ENCODE measurements at regions of chr2 and their contacts with region 1.

Region 1: GRCh38 chr2:190382851-190383250 is 25.3 kb upstream of the MFSD6 start:
- DNase-seq: no peak
- ATAC-seq: peak; percentile 51 to 71 (median 62)
- H3K4me3 ChIP-seq: no peak overlapping the region
- H3K27ac ChIP-seq: no peak overlapping the region
- H3K4me1 ChIP-seq: no peaks in the 10 kb centered on the region
- H3K27me3 ChIP-seq: no peaks in the 10 kb centered on the region
- CTCF ChIP-seq: peak; percentile 33 to 71 (median 59)
- POLR2A ChIP-seq: no peak

Region 2: GRCh38 chr2:190017837-190018236 is 365.0 kb before region 1 on chr2:
- intact Hi-C with region 1: no loop called
- DNase-seq: no peak
- ATAC-seq: no peak
- H3K4me3 ChIP-seq: no peak overlapping the region
- H3K27ac ChIP-seq: no peak overlapping the region
- H3K4me1 ChIP-seq: no peaks in the 10 kb centered on the region
- H3K27me3 ChIP-seq: no peaks in the 10 kb centered on the region
- CTCF ChIP-seq: no peak
- POLR2A ChIP-seq: no peak

Region 3: DNA sequence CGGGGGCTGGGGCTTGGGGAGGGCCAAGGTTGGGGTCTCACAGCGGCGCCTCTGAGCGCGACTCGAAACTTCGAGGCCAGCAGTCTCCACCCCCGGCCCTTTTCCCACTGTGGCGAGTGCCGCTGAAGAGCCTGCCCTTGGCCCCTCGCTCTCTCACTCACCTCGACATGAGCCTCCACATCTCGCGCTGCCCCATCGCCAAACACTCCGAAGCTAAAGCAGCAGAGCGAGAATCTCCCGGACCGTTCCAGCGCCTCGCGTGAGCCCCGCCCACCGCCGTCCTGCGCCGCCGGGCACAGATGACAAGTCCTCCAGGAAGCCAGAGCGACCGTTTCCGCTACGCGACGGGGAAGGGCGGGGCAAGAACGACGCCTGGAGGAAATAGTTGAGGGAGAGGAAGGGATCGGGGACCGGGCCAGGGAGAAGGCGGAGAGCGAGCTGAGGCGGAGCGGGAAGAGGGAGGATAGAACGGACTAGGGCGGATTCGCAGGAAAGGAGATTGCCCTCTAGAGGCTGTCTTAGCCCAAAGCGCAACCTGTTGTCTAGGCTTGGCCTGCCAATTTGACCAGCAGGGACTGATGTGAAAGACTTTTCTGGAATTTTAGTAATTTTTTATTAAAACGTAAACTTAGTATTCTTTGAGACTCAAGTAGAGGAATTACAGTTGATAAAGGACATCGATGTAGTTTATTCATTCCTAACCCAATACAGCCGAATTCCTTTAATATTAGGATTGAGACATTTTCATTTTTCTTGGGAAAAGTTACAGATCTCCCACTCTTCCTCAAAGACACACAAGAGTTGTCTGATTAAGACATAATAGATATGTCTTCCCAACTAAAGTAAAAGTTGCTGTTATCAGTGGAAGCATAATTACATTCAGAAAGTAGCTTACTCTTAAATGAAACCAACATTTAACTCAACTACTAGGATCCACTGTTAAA is 63.0 kb before region 1 on chr2 and contains the start of gene HIBCH:
- intact Hi-C with region 1: loop called in 1 of 10 experiments (anchors 10 kb)
- DNase-seq: peak; percentile 98 to 99 (median 99)
- ATAC-seq: peak; percentile 97 to 99 (median 99)
- H3K4me3 ChIP-seq: peak within 1 kb of the TSS; percentile 65 to 86 (median 74)
- H3K27ac ChIP-seq: peak within 1 kb of the TSS; percentile 42 to 92 (median 86)
- H3K4me1 ChIP-seq: peaks cover 0 to 25% (median 14%) of the 10 kb centered on the region in 12 donors
- H3K27me3 ChIP-seq: no peaks in the 10 kb centered on the region
- CTCF ChIP-seq: peak; percentile 58 to 96 (median 74)
- POLR2A ChIP-seq: peak in 1 of 2 donors; percentile 66
- total RNA-seq, gene HIBCH: 7.7 to 25.3 (median 23.2) TPM

Region 4: DNA sequence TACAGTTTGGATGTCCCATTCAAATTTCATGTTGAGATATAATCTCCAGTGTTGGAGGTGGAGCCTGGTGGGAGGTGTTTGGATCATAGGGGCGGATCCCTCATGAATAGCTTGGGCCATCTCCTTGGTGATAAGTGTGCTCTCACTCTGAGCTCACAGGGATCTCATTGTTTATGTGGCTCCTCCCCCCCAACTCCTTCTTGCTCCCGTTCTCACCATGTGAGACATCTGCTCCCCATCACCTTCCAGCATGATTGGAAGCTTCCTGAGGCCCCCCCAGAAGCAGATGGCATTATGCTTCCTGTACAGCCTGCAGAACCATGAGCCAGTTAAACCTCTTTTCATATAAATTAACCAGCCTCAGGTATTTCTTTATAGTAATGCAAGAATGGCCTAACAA is 42.5 kb before region 1 on chr2:
- intact Hi-C with region 1: no loop called
- DNase-seq: no peak
- ATAC-seq: no peak
- H3K4me3 ChIP-seq: no peak overlapping the region
- H3K27ac ChIP-seq: no peak overlapping the region
- H3K4me1 ChIP-seq: peaks cover 0 to 28% (median 16%) of the 10 kb centered on the region in 12 donors
- H3K27me3 ChIP-seq: no peaks in the 10 kb centered on the region
- CTCF ChIP-seq: no peak
- POLR2A ChIP-seq: no peak

Region 5: GRCh38 chr2:190352668-190353536 is 29.9 kb before region 1 on chr2:
- intact Hi-C with region 1: no loop called
- DNase-seq: no peak
- ATAC-seq: peak; percentile 18 to 64 (median 50)
- H3K4me3 ChIP-seq: no peak overlapping the region
- H3K27ac ChIP-seq: peak overlapping the region in 3 of 12 donors; percentile 1 to 45 (median 28)
- H3K4me1 ChIP-seq: peaks cover 0 to 37% (median 8%) of the 10 kb centered on the region in 12 donors
- H3K27me3 ChIP-seq: no peaks in the 10 kb centered on the region
- CTCF ChIP-seq: no peak
- POLR2A ChIP-seq: no peak

Region 6: DNA sequence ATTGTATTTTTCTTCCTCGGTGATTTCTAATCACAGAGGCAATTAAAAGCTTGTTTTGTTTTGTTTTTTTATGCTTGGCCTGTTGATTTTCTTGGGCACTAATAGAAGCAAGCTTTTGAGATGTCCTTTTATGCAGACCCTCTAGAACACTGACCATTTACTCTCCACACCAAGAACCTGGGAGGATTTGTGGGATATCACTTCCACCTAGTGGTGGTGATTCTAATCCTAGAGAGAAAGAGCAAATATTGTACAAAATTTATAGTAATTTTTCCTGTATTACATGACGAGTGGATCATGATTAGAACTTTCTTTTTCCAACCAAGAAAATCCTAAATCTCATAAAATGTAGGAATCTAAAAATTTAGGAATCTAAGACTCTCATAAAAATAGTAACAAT is 128.3 kb after region 1 on chr2:
- intact Hi-C with region 1: loop called (anchors 1 to 5 kb)
- DNase-seq: no peak
- ATAC-seq: no peak
- H3K4me3 ChIP-seq: no peak overlapping the region
- H3K27ac ChIP-seq: no peak overlapping the region
- H3K4me1 ChIP-seq: peaks cover 0 to 10% (median 0%) of the 10 kb centered on the region in 12 donors
- H3K27me3 ChIP-seq: no peaks in the 10 kb centered on the region
- CTCF ChIP-seq: peak; percentile 16 to 72 (median 58)
- POLR2A ChIP-seq: no peak

Region 7: GRCh38 chr2:190648289-190649034 is 265.6 kb after region 1 on chr2:
- intact Hi-C with region 1: loop called in 1 of 10 experiments (anchors 10 kb)
- DNase-seq: peak; percentile 95 to 96 (median 95)
- ATAC-seq: peak; percentile 92 to 96 (median 94)
- H3K4me3 ChIP-seq: peak overlapping the region; percentile 72 to 93 (median 82)
- H3K27ac ChIP-seq: peak overlapping the region; percentile 80 to 98 (median 92)
- H3K4me1 ChIP-seq: peaks cover 0 to 49% (median 28%) of the 10 kb centered on the region in 12 donors
- H3K27me3 ChIP-seq: no peaks in the 10 kb centered on the region
- CTCF ChIP-seq: no peak
- POLR2A ChIP-seq: peak; percentile 8 to 79

Region 8: DNA sequence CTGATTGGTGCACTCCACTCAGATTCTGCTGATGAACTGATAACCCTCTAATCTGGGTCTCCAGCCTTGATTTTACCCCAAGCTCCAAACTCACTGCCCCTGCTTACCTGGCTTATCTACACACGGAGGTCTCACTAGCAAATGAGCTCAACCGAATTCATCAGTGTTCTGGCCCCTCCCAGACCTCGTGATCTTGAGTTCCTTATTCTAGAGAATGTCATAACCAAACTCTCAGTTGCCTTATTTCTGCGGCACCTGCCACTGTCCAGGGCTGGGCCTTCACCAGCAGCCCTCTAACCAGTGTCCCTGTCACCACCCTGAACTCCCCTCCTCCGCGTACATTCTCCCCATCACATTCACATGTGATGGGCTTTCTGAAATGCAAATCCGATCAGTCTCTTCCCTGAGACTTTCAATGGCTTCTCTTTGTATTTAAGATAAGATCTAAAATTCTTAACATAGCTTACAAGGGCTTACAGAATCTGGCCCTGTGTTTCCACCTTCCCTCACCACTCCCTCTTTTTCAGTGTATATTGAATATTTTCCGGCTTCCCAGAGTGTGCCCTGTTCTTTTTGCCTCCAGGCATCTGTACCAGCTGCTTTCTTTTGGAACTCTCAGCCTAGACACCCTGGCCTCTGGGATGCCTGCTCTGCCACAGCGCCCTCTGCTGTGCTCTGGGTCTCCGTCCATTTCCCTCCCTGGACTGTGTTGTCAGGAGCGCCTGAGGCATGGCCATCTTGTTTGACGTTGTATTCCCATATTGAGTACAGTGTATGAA is 297.2 kb after region 1 on chr2:
- intact Hi-C with region 1: loop called in 1 of 10 experiments (anchors 10 kb)
- DNase-seq: peak in 3 of 5 donors; percentile 27 to 66 (median 37)
- ATAC-seq: peak in 3 of 4 donors; percentile 52 to 72 (median 71)
- H3K4me3 ChIP-seq: no peak overlapping the region
- H3K27ac ChIP-seq: peak overlapping the region in 2 of 12 donors; percentile 1 to 56
- H3K4me1 ChIP-seq: peaks cover 0 to 63% (median 27%) of the 10 kb centered on the region in 12 donors
- H3K27me3 ChIP-seq: no peaks in the 10 kb centered on the region
- CTCF ChIP-seq: peak; percentile 28 to 63 (median 44)
- POLR2A ChIP-seq: no peak